Lower leg skin (tissue), 4 donors: ENCODE measurements at regions of chr2 and their contacts with region 1.

Region 1: GRCh38 chr2:26480566-26481423 is 2.9 kb upstream of the OTOF start:
- DNase-seq: no peak
- H3K4me3 ChIP-seq: no peak overlapping the region
- CTCF ChIP-seq: no peak
- POLR2A ChIP-seq: no peak

Region 2: DNA sequence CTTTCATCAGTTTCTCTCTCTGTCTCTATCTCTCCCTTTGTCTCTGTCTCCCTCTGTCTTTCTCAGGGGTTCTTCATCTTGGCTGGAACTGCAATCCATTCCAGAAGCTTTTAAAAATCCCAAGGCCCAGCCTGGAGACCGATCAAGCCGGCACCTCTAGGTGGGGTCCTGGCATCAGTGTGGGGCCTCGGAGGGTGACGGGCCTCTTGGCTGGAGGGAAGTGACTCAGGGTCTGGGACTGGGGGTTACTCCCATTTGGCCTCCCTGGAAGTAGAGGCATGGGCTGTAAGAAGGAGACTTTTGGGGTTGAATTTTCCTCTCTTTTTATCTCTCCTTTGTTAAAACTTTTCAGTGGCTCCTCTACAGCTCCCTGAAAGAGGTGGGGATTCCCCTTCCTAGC is 49.9 kb after region 1 on chr2:
- intact Hi-C with region 1: no loop called
- DNase-seq: peak in 1 of 2 donors; percentile 68
- H3K4me3 ChIP-seq: no peak overlapping the region
- CTCF ChIP-seq: no peak
- POLR2A ChIP-seq: no peak

Region 3: GRCh38 chr2:26558341-26559043 is 77.7 kb after region 1 on chr2:
- intact Hi-C with region 1: loop called (anchors 2 kb)
- DNase-seq: no peak
- H3K4me3 ChIP-seq: no peak overlapping the region
- CTCF ChIP-seq: no peak
- POLR2A ChIP-seq: no peak